Activated CD4-positive, alpha-beta T cell treated with anti-CD3 and anti-CD28 coated beads, Interleukin-2, amount 10 ng/mL, durations not matched to agents 7 days and 5 days (primary cell): ENCODE measurements at regions of chr1 and their contacts with region 1.

Region 1: GRCh38 chr1:151968058-151968457 is 25.6 kb downstream of the S100A10 start:
- DNase-seq: peak; percentile 72
- H3K4me3 Mint-ChIP-seq: no peak overlapping the region
- H3K27ac Mint-ChIP-seq: peak overlapping the region; percentile 38
- H3K4me1 Mint-ChIP-seq: peaks cover 22% of the 10 kb centered on the region
- H3K27me3 Mint-ChIP-seq: peaks cover 8% of the 10 kb centered on the region

Region 2: GRCh38 chr1:151949371-151950193 is 18.5 kb before region 1 on chr1:
- CTCF ChIA-PET with region 1: interaction called, 12 read pairs
- POLR2A ChIA-PET with region 1: no interaction called
- DNase-seq: no peak
- H3K4me3 Mint-ChIP-seq: no peak overlapping the region
- H3K27ac Mint-ChIP-seq: no peak overlapping the region
- H3K4me1 Mint-ChIP-seq: peaks cover 23% of the 10 kb centered on the region
- H3K27me3 Mint-ChIP-seq: peaks cover 10% of the 10 kb centered on the region

Region 3: GRCh38 chr1:151984313-151984956 is 16.4 kb after region 1 on chr1:
- CTCF ChIA-PET with region 1: interaction called, 21 read pairs
- POLR2A ChIA-PET with region 1: interaction called, 6 read pairs
- DNase-seq: peak; percentile 42
- H3K4me3 Mint-ChIP-seq: no peak overlapping the region
- H3K27ac Mint-ChIP-seq: peak overlapping the region; percentile 57
- H3K4me1 Mint-ChIP-seq: peaks cover 62% of the 10 kb centered on the region
- H3K27me3 Mint-ChIP-seq: no peaks in the 10 kb centered on the region

Region 4: GRCh38 chr1:151993654-151994496 is 25.8 kb after region 1 on chr1 and contains the start of gene S100A10:
- CTCF ChIA-PET with region 1: interaction called, 17 read pairs
- POLR2A ChIA-PET with region 1: interaction called, 3 read pairs
- DNase-seq: peak; percentile 85
- H3K4me3 Mint-ChIP-seq: peak within 1 kb of the TSS; percentile 95
- H3K27ac Mint-ChIP-seq: peak within 1 kb of the TSS; percentile 98
- H3K4me1 Mint-ChIP-seq: peaks cover 49% of the 10 kb centered on the region
- H3K27me3 Mint-ChIP-seq: peaks cover 2% of the 10 kb centered on the region
- total RNA-seq, gene S100A10: 561 to 662 TPM

Region 5: GRCh38 chr1:152001391-152002249 is 33.6 kb after region 1 on chr1:
- CTCF ChIA-PET with region 1: interaction called, 75 read pairs
- POLR2A ChIA-PET with region 1: interaction called, 5 read pairs
- DNase-seq: peak; percentile 84
- H3K4me3 Mint-ChIP-seq: no peak overlapping the region
- H3K27ac Mint-ChIP-seq: no peak overlapping the region
- H3K4me1 Mint-ChIP-seq: peaks cover 16% of the 10 kb centered on the region
- H3K27me3 Mint-ChIP-seq: peaks cover 38% of the 10 kb centered on the region

Region 6: DNA sequence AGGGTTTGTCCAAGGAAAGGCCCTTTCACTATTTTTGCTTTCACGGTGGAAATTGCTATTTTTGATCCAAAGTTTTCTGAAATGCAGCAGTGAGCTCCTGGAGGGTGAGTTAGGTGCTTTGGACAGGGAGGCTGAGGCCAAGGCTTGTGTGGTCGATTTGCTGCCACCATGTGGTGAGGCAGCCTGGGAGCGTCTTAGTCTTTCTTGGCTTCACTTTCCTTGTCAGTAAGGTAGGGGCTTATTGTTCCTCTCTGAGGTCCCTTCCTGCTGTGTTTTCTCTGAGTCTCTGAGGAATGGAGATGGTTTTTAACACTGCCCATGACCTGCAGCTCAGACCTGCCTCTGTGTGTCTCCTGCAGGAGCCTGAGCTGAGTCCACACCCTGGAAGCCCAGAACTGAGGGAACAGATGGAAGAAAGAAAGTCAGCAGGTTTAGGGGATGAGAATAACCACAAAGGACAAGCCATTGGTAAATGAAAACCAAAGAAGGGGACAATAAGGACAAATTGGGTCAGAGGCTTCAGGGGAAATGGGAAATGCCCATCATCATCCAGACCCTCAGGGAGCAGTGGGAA is 45.7 kb after region 1 on chr1:
- CTCF ChIA-PET with region 1: interaction called, 13 read pairs
- POLR2A ChIA-PET with region 1: interaction called, 4 read pairs
- DNase-seq: peak; percentile 58
- H3K4me3 Mint-ChIP-seq: no peak overlapping the region
- H3K27ac Mint-ChIP-seq: no peak overlapping the region
- H3K4me1 Mint-ChIP-seq: peaks cover 4% of the 10 kb centered on the region
- H3K27me3 Mint-ChIP-seq: peaks cover 29% of the 10 kb centered on the region

Region 7: GRCh38 chr1:152461528-152461927 is 493.5 kb after region 1 on chr1:
- CTCF ChIA-PET with region 1: no interaction called
- POLR2A ChIA-PET with region 1: no interaction called
- DNase-seq: peak; percentile 79
- H3K4me3 Mint-ChIP-seq: no peak overlapping the region
- H3K27ac Mint-ChIP-seq: no peak overlapping the region
- H3K4me1 Mint-ChIP-seq: peaks cover 31% of the 10 kb centered on the region
- H3K27me3 Mint-ChIP-seq: peaks cover 13% of the 10 kb centered on the region